ENCODE measurements at regions of chr12 and their contacts with region 1.

Region 1: DNA sequence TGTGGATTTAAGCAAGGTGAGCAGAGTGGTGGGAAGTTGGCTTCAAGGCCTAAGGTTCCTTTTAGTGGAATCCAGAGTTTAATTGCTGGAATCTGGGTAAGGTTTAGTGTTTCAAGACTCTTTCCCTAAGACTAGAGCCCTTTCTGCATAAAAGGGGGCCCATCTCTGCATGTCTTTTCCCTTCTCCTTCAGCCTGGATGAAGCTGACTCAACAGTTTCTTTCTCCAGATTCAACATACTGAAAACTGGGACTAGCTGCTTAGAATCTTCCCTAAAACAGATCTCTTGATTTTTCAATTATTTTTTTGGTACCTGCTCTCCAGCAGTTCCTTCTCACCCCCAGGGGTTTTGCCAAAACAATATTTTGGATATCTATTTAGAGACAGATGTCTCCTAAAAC is 34.0 kb downstream of the SLC4A8 start:
- DNase-seq: no peak
- H3K4me3 ChIP-seq: no peak overlapping the region
- H3K27ac ChIP-seq: no peak overlapping the region
- H3K4me1 ChIP-seq: peaks cover 0 to 10% (median 0%) of the 10 kb centered on the region in 4 experiments; a peak in 1 of 7 replicates
- H3K27me3 ChIP-seq: no peaks in the 10 kb centered on the region
- CTCF ChIP-seq: no peak
- EP300 ChIP-seq: no peak
- POLR2A ChIP-seq: no peak
- RAD21 ChIP-seq: no peak

Region 2: GRCh38 chr12:51470116-51470515 is 11.5 kb after region 1 on chr12:
- CTCF ChIA-PET with region 1: interaction called, 13 read pairs
- POLR2A ChIA-PET with region 1: no interaction called
- DNase-seq: no peak
- H3K4me3 ChIP-seq: no peak overlapping the region
- H3K27ac ChIP-seq: no peak overlapping the region
- H3K4me1 ChIP-seq: no peaks in the 10 kb centered on the region
- H3K27me3 ChIP-seq: no peaks in the 10 kb centered on the region
- CTCF ChIP-seq: no peak
- EP300 ChIP-seq: no peak
- POLR2A ChIP-seq: no peak
- RAD21 ChIP-seq: no peak

Region 3: DNA sequence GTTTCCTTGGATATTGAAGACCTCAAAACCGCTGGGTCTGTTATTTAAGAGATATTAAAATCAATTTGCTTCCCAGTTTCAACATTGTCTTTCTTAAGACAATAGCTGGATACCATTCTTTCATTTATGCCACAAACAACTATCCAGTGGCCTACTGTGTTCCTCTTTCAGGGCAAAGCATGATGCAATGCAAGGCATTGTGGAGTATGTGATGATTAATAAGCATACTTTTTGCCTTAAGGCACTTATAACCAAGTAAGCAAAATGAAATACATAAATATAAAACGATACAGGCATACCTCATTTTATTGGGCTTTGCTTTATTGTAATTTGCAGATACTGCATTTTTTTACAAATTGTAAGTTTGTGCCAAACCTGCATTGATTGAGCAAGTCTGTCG is 177.9 kb after region 1 on chr12:
- CTCF ChIA-PET with region 1: no interaction called
- POLR2A ChIA-PET with region 1: no interaction called
- DNase-seq: no peak
- H3K4me3 ChIP-seq: no peak overlapping the region
- H3K27ac ChIP-seq: no peak overlapping the region
- H3K4me1 ChIP-seq: peaks cover 0 to under 1% (median 0%) of the 10 kb centered on the region in 4 experiments; a peak in 2 of 7 replicates
- H3K27me3 ChIP-seq: no peaks in the 10 kb centered on the region
- CTCF ChIP-seq: no peak
- EP300 ChIP-seq: no peak
- POLR2A ChIP-seq: no peak
- RAD21 ChIP-seq: no peak

Region 4: DNA sequence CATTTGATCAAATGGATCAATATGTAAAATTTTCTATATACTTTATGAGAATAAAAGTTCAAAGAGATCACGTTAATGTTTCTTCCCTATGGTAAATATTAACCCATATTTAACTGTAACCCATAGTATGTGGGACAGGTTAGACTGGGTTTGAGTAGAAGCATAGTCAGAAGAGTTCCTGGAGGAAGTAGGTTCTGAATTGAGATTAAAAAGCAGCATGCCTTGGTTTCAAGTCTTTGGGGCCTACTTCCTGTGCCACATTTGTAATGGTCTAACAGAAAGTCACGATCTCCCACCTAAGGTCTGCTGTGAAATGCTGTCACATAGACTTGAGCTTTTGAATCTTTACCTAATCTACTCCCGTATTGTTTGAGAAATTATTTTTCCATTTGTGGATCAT is 326.1 kb after region 1 on chr12:
- CTCF ChIA-PET with region 1: no interaction called
- POLR2A ChIA-PET with region 1: no interaction called
- DNase-seq: no peak
- H3K4me3 ChIP-seq: no peak overlapping the region
- H3K27ac ChIP-seq: no peak overlapping the region
- H3K4me1 ChIP-seq: no peaks in the 10 kb centered on the region
- H3K27me3 ChIP-seq: no peaks in the 10 kb centered on the region
- CTCF ChIP-seq: no peak
- EP300 ChIP-seq: no peak
- POLR2A ChIP-seq: no peak
- RAD21 ChIP-seq: no peak

Measured in H1 (cell line).